ENCODE measurements at regions of chr20 and their contacts with region 1.

Region 1: DNA sequence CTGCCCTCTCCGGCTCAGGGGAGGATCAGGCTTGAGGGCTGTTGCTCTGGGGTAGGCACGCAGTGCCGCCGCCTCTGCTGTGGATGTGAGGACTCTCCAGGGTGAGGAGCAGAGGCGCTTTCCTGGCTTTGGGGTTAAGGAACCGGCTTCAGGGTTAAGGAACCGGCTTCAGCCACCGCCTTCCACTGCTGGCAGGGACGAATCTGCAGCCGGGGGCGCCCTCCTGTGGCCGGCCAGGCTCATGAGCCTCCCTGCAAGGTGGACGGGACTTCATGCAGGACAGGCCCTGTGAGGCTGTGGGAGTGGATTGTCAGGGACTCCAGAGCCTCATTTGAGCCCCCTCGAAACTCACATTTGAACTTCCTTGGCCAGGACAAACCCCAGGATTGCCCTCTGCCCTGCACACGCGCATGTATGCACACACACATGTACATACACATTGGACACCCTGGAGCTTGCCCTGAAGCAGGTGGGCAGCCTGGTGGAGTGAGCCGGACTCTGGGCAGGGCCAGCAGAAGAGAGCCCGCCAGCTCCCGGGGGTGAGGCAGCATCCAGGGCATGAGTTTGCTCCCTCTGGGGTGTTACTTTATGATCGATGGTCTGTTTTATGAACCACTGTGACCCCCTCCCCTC is 146.8 kb downstream of the PHACTR3 start:
- DNase-seq: peak; percentile 85 to 90
- ATAC-seq: peak; percentile 67
- H3K4me3 ChIP-seq: no peak overlapping the region
- H3K27ac ChIP-seq: no peak overlapping the region
- H3K4me1 ChIP-seq: no peaks in the 10 kb centered on the region
- H3K27me3 ChIP-seq: no peaks in the 10 kb centered on the region

Region 2: GRCh38 chr20:59571551-59572314 is 179.4 kb before region 1 on chr20:
- intact Hi-C with region 1: loop called (anchors 1 to 5 kb)
- DNase-seq: peak; percentile 66 to 84
- ATAC-seq: peak; percentile 72
- H3K4me3 ChIP-seq: peak overlapping the region in 1 of 2 donors; percentile 45
- H3K27ac ChIP-seq: no peak overlapping the region
- H3K4me1 ChIP-seq: no peaks in the 10 kb centered on the region
- H3K27me3 ChIP-seq: no peaks in the 10 kb centered on the region

Region 3: GRCh38 chr20:59598625-59599310 is 152.4 kb before region 1 on chr20:
- intact Hi-C with region 1: loop called (anchors 1 to 5 kb)
- DNase-seq: peak in 1 of 2 donors; percentile 74
- ATAC-seq: peak; percentile 40
- H3K4me3 ChIP-seq: no peak overlapping the region
- H3K27ac ChIP-seq: no peak overlapping the region
- H3K4me1 ChIP-seq: no peaks in the 10 kb centered on the region
- H3K27me3 ChIP-seq: no peaks in the 10 kb centered on the region

Region 4: GRCh38 chr20:59718751-59719150 is 32.4 kb before region 1 on chr20:
- intact Hi-C with region 1: no loop called
- DNase-seq: no peak
- ATAC-seq: no peak
- H3K4me3 ChIP-seq: no peak overlapping the region
- H3K27ac ChIP-seq: no peak overlapping the region
- H3K4me1 ChIP-seq: no peaks in the 10 kb centered on the region
- H3K27me3 ChIP-seq: no peaks in the 10 kb centered on the region

Region 5: GRCh38 chr20:59820204-59821041 is 69.3 kb after region 1 on chr20:
- intact Hi-C with region 1: no loop called
- DNase-seq: peak in 1 of 2 donors; percentile 39
- ATAC-seq: no peak
- H3K4me3 ChIP-seq: no peak overlapping the region
- H3K27ac ChIP-seq: no peak overlapping the region
- H3K4me1 ChIP-seq: no peaks in the 10 kb centered on the region
- H3K27me3 ChIP-seq: no peaks in the 10 kb centered on the region

Region 6: GRCh38 chr20:60167812-60168211 is 416.6 kb after region 1 on chr20:
- intact Hi-C with region 1: no loop called
- DNase-seq: no peak
- ATAC-seq: no peak
- H3K4me3 ChIP-seq: no peak overlapping the region
- H3K27ac ChIP-seq: no peak overlapping the region
- H3K4me1 ChIP-seq: no peaks in the 10 kb centered on the region
- H3K27me3 ChIP-seq: no peaks in the 10 kb centered on the region